Activated CD4-positive, alpha-beta T cell treated with anti-CD3 and anti-CD28 coated beads for 36 hours (primary cell): ENCODE measurements at regions of chr21 and their contacts with region 1.

Region 1: DNA sequence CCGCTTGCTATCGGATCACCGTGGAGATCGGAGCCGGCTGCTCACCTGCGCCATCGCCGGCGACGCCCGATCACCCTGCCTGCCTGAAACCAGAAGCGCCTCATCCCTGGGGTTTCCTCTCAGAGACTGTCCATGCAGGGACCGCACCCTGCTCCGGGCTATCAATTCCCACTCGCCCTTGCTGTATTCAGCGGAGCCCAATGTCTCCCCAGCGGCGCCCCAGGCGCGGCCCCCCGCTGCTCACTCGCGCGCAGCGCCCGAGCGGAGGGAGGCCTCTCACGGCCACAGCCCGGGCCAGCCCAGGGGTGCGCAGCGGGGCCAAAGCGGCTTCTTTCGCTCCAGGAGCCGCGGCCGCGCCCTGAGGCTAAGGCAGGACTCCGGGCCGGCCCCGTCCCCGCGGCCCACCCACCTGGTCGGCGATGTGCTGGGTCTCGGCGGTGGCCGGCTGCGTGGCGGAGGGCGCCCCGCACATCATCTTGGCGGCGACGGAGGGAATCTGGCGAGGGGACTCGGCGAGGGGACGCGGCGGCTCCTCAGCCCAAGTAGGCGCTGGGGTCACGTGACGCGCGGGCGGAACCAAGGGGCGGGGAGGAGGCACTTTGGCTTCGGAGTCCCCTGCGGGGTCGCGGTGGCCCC is at the start of gene CSTB:
- DNase-seq: peak; percentile 90
- ATAC-seq: peak; percentile 72
- H3K4me3 Mint-ChIP-seq: peak within 1 kb of the TSS; percentile 88
- H3K27ac Mint-ChIP-seq: peak within 1 kb of the TSS; percentile 74
- H3K4me1 Mint-ChIP-seq: peaks cover 40% of the 10 kb centered on the region
- H3K27me3 Mint-ChIP-seq: no peaks in the 10 kb centered on the region
- total RNA-seq, gene CSTB: 29.9 to 30.9 TPM

Region 2: DNA sequence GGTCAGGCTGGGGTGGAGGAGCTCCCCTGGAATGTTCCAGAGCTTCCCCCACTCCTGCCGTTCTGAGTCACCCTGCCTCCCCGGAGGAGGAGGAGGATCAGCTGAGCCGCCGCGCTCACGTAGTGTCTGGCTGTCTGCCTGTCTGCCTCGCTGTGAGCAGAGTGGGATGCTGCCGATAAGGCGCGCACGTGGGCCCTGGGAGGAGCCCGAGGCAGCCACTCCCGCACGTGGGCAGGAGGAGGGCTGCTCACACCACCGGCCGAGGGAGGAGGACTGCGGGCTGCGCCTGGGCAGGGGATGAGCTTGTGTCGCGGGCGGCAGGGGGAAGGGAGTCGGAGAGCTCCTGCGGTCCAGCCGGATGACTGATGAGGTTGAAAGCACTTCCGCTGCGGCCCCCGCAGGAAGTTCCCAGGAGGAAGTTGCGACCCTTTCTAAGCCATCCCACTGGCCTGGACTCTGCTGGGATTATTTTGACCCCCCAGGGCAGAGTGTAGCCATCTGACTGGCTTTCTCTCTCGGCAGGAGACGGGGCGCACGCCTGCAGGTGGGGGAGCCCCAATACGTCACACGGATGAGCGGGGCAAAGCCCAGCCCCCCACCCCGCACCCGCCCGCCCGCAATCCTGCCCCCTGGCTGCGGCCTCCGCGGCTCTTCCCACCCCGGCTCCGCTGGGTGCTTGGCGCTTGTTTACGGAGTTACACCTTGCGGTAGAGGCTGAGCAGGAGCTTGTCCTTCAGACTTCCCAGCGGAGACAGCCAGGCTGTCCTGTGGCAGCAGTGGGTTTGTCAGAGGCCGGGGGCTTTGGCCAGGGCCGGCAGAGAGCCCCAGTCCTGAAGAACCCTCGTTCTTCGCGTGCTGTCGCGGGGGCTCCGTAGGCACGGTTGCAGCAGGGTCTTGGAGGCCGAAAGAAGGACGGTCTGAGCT is 47.2 kb before region 1 on chr21:
- CTCF ChIA-PET with region 1: no interaction called
- POLR2A ChIA-PET with region 1: no interaction called
- intact Hi-C with region 1: loop called (anchors 2 to 5 kb)
- DNase-seq: peak; percentile 90
- ATAC-seq: peak; percentile 87
- H3K4me3 Mint-ChIP-seq: peak overlapping the region; percentile 78
- H3K27ac Mint-ChIP-seq: peak overlapping the region; percentile 92
- H3K4me1 Mint-ChIP-seq: peaks cover 71% of the 10 kb centered on the region
- H3K27me3 Mint-ChIP-seq: no peaks in the 10 kb centered on the region

Region 3: DNA sequence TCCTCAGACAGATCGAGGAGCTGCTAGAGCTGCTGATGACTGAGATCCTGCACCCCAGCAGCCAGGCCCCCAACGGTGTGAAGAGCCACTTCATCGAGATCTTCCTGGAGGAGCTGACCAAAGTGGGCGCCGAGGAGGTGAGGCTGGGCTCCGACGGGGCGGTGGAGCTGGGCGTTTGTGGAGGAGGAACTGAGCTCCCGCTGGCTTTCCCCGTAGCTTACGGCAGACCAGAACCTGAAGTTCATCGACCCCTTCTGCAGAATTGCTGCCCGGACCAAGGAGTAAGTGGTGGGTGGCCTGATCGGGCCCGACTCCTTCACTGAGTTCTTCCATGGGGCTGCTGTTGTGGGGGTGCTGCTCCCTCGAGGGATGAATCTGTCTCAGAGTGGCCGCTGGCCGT is 21.5 kb after region 1 on chr21:
- CTCF ChIA-PET with region 1: no interaction called
- POLR2A ChIA-PET with region 1: no interaction called
- intact Hi-C with region 1: no loop called
- DNase-seq: no peak
- ATAC-seq: no peak
- H3K4me3 Mint-ChIP-seq: no peak overlapping the region
- H3K27ac Mint-ChIP-seq: no peak overlapping the region
- H3K4me1 Mint-ChIP-seq: peaks cover 3% of the 10 kb centered on the region
- H3K27me3 Mint-ChIP-seq: no peaks in the 10 kb centered on the region